ENCODE measurements at regions of chr14 and their contacts with region 1.

Region 1: GRCh38 chr14:22531451-22532344 is 57.3 kb downstream of the DAD1 start:
- DNase-seq: no peak
- H3K4me3 Mint-ChIP-seq: peak overlapping the region; percentile 77
- H3K27ac Mint-ChIP-seq: peak overlapping the region; percentile 91
- H3K4me1 Mint-ChIP-seq: peaks cover 89% of the 10 kb centered on the region
- H3K27me3 Mint-ChIP-seq: no peaks in the 10 kb centered on the region

Region 2: DNA sequence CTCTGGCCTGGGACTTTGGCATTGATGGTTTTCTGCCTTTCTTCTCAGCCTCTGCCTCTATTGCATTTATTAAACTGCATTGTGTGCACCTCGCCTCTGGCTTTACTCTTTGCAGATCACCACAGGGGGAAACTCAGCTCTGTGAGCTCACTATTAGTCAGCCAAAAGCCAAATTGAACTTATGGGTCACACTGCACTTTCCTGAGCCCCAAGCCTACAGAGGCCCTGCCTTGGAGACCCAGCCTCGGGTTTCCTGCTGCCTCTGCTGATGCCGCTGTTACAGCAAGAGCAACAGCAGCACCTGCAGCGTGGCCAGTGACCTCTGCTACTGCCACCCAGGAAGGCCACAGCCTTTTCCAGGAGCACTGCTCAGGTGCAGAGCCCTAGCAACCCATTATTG is 65.2 kb before region 1 on chr14:
- CTCF ChIA-PET with region 1: no interaction called
- POLR2A ChIA-PET with region 1: no interaction called
- DNase-seq: no peak
- H3K4me3 Mint-ChIP-seq: no peak overlapping the region
- H3K27ac Mint-ChIP-seq: no peak overlapping the region
- H3K4me1 Mint-ChIP-seq: no peaks in the 10 kb centered on the region
- H3K27me3 Mint-ChIP-seq: no peaks in the 10 kb centered on the region

Region 3: DNA sequence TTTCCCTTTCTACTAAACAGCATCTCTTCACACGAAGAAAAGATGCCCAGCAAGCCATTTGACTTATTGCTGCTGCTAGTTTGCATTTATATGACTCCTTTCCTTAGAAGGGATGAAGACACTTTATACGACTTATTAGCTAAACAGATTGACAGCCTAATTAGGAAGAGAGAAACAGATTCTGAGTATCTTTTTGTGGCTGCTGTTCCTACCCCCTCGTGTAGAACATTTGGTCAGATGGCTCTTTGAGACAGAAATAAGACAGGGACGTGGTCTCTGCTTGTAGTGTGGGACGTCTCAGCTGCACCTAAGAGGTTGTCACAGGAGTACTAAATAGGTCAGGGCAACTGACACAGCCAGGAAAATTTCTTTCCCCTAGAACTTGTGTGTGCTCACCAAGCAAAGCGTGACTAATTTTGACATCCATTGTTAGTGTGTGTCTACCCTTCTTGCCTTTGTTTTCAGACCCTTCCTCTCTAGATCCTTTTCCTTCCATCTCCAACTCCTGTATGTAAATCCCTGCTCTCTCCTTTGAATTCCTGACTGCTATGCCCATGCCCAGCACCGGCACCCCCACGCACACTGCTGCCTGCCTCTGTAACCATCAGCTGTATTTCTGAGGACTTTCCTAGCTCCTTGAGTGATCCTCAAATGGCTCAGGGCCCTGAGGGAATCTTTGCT is 25.9 kb before region 1 on chr14:
- CTCF ChIA-PET with region 1: interaction called, 4 read pairs
- POLR2A ChIA-PET with region 1: interaction called, 10 read pairs
- DNase-seq: no peak
- H3K4me3 Mint-ChIP-seq: peak overlapping the region; percentile 85
- H3K27ac Mint-ChIP-seq: peak overlapping the region; percentile 96
- H3K4me1 Mint-ChIP-seq: peaks cover 66% of the 10 kb centered on the region
- H3K27me3 Mint-ChIP-seq: no peaks in the 10 kb centered on the region

Region 4: GRCh38 chr14:22872033-22872832 is 340.5 kb after region 1 on chr14:
- CTCF ChIA-PET with region 1: no interaction called
- POLR2A ChIA-PET with region 1: no interaction called
- DNase-seq: peak; percentile 76
- H3K4me3 Mint-ChIP-seq: peak overlapping the region; percentile 89
- H3K27ac Mint-ChIP-seq: peak overlapping the region; percentile 99
- H3K4me1 Mint-ChIP-seq: peaks cover 26% of the 10 kb centered on the region
- H3K27me3 Mint-ChIP-seq: no peaks in the 10 kb centered on the region

Measured in activated CD4-positive, alpha-beta T cell treated with anti-CD3 and anti-CD28 coated beads, Interleukin-2, amount 10 ng/mL, durations not matched to agents 7 days and 5 days (primary cell).